AG04449 (cell line): ENCODE measurements at regions of chr3 and their contacts with region 1.

Region 1: GRCh38 chr3:159884661-159885402 is 103.8 kb upstream of the IL12A start:
- DNase-seq: no peak
- H3K4me3 ChIP-seq: no peak overlapping the region
- CTCF ChIP-seq: peak; percentile 31

Region 2: DNA sequence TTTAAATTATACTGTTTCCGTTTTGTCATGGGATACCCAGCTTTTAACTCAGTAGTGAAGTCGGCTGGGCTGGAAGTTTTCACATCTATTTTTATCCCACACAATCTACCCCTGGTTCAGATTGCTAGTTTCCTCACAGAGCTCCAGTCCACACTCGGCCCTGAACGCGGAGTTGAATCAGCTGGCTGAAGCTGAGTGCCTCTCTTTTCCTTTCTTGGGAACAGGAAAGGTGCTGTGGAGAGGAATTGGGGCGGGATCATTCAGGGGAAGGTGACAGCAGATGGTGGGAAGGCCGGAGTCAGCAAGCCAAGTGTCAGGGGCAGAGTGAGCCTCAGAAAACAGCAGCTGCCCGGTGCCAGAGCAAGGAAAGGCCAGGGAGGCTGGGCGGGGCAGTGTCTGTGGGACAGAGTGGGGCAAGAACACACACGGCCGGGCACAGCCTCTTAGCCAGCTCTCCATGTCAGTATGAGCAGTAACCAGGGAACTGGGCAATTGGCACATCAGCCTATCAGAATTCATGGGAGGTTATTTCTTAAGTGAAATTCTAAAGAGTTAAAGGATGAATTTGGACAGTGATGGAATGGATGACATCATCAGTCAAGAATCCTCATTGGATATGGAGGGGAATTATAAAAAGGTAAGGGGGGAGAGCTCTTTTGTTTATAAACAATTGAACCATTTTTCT is 31.9 kb before region 1 on chr3:
- CTCF ChIA-PET with region 1: interaction called, 42 read pairs
- POLR2A ChIA-PET with region 1: interaction called, 5 read pairs
- DNase-seq: no peak
- H3K4me3 ChIP-seq: peak overlapping the region; percentile 43
- CTCF ChIP-seq: no peak

Region 3: GRCh38 chr3:159902546-159903314 is 17.9 kb after region 1 on chr3:
- CTCF ChIA-PET with region 1: interaction called, 146 read pairs
- POLR2A ChIA-PET with region 1: no interaction called
- DNase-seq: no peak
- H3K4me3 ChIP-seq: no peak overlapping the region
- CTCF ChIP-seq: no peak

Region 4: GRCh38 chr3:159947220-159947619 is 62.4 kb after region 1 on chr3:
- CTCF ChIA-PET with region 1: interaction called, 20 read pairs
- POLR2A ChIA-PET with region 1: interaction called, 3 read pairs
- DNase-seq: peak; percentile 98
- H3K4me3 ChIP-seq: no peak overlapping the region
- CTCF ChIP-seq: no peak

Region 5: DNA sequence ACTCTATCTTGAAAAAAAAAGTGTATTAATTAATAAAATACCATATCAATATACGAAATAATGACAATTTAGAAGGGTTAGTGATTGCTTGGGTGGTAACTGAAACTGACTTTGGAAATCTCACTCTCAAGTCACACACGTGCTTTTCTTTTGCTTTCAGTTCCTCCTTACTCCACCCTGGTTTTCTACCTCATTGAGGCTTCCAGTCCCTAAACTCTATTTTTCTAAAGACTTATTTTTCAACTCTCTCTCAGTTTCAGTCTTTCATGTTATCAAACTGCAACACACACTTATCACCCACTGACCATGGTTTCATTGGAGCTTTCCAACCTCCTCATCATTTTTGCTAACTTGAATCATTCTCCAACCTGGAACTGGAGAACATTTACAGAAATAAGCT is 127.3 kb after region 1 on chr3:
- CTCF ChIA-PET with region 1: interaction called, 683 read pairs
- POLR2A ChIA-PET with region 1: interaction called, 3 read pairs
- DNase-seq: no peak
- H3K4me3 ChIP-seq: no peak overlapping the region
- CTCF ChIP-seq: no peak

Region 6: DNA sequence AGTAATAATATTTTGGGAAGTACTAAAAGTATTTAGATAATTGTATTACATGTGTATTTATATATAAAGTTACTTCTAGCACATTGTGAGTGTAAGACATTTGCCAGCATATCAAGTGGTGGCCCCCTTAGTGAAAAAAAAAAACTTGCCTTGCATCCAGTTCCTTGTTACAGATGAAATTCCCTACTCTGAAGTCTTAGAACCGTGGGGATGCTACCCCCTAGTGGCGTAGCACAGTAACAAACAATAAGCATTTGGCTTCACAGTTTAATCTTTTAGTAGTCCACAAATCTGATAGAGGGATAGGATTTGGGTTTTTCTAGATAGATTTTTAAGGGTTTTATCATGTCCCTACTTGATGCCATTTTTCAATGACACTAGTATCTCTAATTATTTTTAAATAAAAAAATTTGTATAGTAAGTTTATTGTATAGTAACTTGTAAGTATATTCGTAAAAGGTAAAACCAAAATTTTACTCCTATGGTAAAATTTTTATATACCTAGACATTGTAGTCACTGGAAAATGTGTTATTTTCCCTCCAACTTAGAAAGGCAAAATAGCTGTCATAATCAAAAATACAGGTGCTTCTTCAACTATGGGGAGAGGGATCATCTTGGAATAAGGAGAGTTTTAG is 528.9 kb after region 1 on chr3:
- CTCF ChIA-PET with region 1: interaction called, 22 read pairs
- POLR2A ChIA-PET with region 1: no interaction called
- DNase-seq: no peak
- H3K4me3 ChIP-seq: no peak overlapping the region
- CTCF ChIP-seq: peak; percentile 70